Gastrocnemius medialis (tissue), 4 donors: ENCODE measurements at regions of chr9 and their contacts with region 1.

Region 1: DNA sequence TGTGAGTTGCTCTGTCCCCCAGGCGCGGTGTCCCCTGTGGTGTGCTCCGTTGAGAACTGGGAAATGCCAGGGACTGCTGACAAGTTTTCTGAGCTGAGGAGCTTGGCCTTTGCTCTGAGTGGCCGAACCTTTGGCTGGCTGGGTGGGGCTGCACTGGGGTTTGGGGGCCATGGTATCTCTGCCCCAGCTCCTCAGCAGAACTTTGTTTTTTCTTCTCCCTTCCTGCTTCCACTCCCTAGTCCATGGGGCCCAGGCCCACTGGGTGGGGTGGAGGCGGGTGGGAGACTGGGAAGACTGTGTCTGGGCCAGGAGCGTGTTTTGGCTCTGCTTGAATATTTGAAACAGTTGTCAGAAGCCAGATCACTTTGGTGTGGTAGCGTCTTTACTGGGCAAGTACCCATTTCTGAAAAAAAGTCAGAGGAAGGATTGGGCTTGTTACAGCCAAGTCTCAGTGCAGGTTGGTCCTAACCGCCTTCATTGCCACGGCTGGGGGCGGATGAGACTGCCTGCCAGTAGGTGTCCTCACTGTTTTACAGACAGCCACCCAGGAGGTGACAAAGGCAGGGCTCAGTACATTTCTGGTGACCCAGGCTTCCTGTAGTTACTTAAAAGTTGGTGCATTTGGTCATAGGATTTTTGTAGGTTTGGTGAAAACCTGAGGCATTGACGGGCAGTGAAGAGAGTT is 92.7 kb downstream of the DAB2IP start:
- DNase-seq: peak; percentile 70 to 79
- ATAC-seq: peak; percentile 64 to 65
- H3K4me3 ChIP-seq: peak overlapping the region; percentile 54 to 61 (median 56)
- H3K27ac ChIP-seq: peak overlapping the region; percentile 91 to 98 (median 94)
- H3K4me1 ChIP-seq: peaks cover 81 to 84% of the 10 kb centered on the region in 2 donors
- H3K27me3 ChIP-seq: no peaks in the 10 kb centered on the region
- CTCF ChIP-seq: peak; percentile 34 to 73 (median 58)
- POLR2A ChIP-seq: no peak

Region 2: GRCh38 chr9:121362813-121363621 is 381.1 kb before region 1 on chr9:
- in situ Hi-C with region 1: no loop called
- intact Hi-C with region 1: loop called (anchors 5 kb)
- DNase-seq: no peak
- ATAC-seq: peak; percentile 45 to 62
- H3K4me3 ChIP-seq: peak overlapping the region in 3 of 4 donors; percentile 10 to 34 (median 13)
- H3K27ac ChIP-seq: peak overlapping the region; percentile 94 to 99 (median 96)
- H3K4me1 ChIP-seq: peaks cover 96 to 97% of the 10 kb centered on the region in 2 donors
- H3K27me3 ChIP-seq: no peaks in the 10 kb centered on the region
- CTCF ChIP-seq: no peak
- POLR2A ChIP-seq: no peak

Region 3: GRCh38 chr9:121598965-121599871 is 144.9 kb before region 1 on chr9:
- in situ Hi-C with region 1: no loop called
- intact Hi-C with region 1: no loop called
- DNase-seq: peak; percentile 83 to 90
- ATAC-seq: peak; percentile 55 to 68
- H3K4me3 ChIP-seq: peak overlapping the region; percentile 70 to 98 (median 76)
- H3K27ac ChIP-seq: peak overlapping the region; percentile 94 to 98 (median 96)
- H3K4me1 ChIP-seq: peaks cover 40 to 41% of the 10 kb centered on the region in 2 donors
- H3K27me3 ChIP-seq: no peaks in the 10 kb centered on the region
- CTCF ChIP-seq: peak in 1 of 5 experiments; percentile 8
- POLR2A ChIP-seq: peak; percentile 89 to 92

Region 4: GRCh38 chr9:121686930-121687541 is 57.1 kb before region 1 on chr9:
- in situ Hi-C with region 1: no loop called
- intact Hi-C with region 1: loop called (anchors 5 kb)
- DNase-seq: peak; percentile 57 to 80
- ATAC-seq: peak; percentile 77 to 86
- H3K4me3 ChIP-seq: no peak overlapping the region
- H3K27ac ChIP-seq: peak overlapping the region; percentile 65 to 69 (median 67)
- H3K4me1 ChIP-seq: peaks cover 20 to 23% of the 10 kb centered on the region in 2 donors
- H3K27me3 ChIP-seq: no peaks in the 10 kb centered on the region
- CTCF ChIP-seq: peak; percentile 80 to 90 (median 87)
- POLR2A ChIP-seq: no peak

Region 5: GRCh38 chr9:121770415-121771273 is 26.5 kb after region 1 on chr9:
- in situ Hi-C with region 1: no loop called
- intact Hi-C with region 1: loop called (anchors 1 kb)
- DNase-seq: no peak
- ATAC-seq: no peak
- H3K4me3 ChIP-seq: no peak overlapping the region
- H3K27ac ChIP-seq: peak overlapping the region; percentile 80 to 88 (median 85)
- H3K4me1 ChIP-seq: peaks cover 31 to 34% of the 10 kb centered on the region in 2 donors
- H3K27me3 ChIP-seq: no peaks in the 10 kb centered on the region
- CTCF ChIP-seq: no peak
- POLR2A ChIP-seq: no peak

Region 6: GRCh38 chr9:121861501-121862180 is 117.5 kb after region 1 on chr9:
- in situ Hi-C with region 1: no loop called
- intact Hi-C with region 1: loop called (anchors 1 kb)
- DNase-seq: peak; percentile 40 to 70
- ATAC-seq: peak; percentile 73 to 91
- H3K4me3 ChIP-seq: no peak overlapping the region
- H3K27ac ChIP-seq: peak overlapping the region in 2 of 4 donors; percentile 2 to 39
- H3K4me1 ChIP-seq: peaks cover 3 to 6% of the 10 kb centered on the region in 2 donors
- H3K27me3 ChIP-seq: no peaks in the 10 kb centered on the region
- CTCF ChIP-seq: peak; percentile 29 to 66 (median 55)
- POLR2A ChIP-seq: no peak

Region 7: GRCh38 chr9:122016744-122017143 is 272.6 kb after region 1 on chr9:
- in situ Hi-C with region 1: no loop called
- intact Hi-C with region 1: no loop called
- DNase-seq: no peak
- ATAC-seq: no peak
- H3K4me3 ChIP-seq: no peak overlapping the region
- H3K27ac ChIP-seq: no peak overlapping the region
- H3K4me1 ChIP-seq: peaks cover 30 to 35% of the 10 kb centered on the region in 2 donors
- H3K27me3 ChIP-seq: no peaks in the 10 kb centered on the region
- CTCF ChIP-seq: peak in 2 of 5 experiments; percentile 12 to 48
- POLR2A ChIP-seq: no peak

Region 8: GRCh38 chr9:122180651-122181050 is 436.5 kb after region 1 on chr9:
- in situ Hi-C with region 1: no loop called
- intact Hi-C with region 1: no loop called
- DNase-seq: no peak
- ATAC-seq: no peak
- H3K4me3 ChIP-seq: no peak overlapping the region
- H3K27ac ChIP-seq: no peak overlapping the region
- H3K4me1 ChIP-seq: no peaks in the 10 kb centered on the region
- H3K27me3 ChIP-seq: peaks cover 0 to 18% (median 15%) of the 10 kb centered on the region in 3 donors
- CTCF ChIP-seq: no peak
- POLR2A ChIP-seq: no peak

Region 9: DNA sequence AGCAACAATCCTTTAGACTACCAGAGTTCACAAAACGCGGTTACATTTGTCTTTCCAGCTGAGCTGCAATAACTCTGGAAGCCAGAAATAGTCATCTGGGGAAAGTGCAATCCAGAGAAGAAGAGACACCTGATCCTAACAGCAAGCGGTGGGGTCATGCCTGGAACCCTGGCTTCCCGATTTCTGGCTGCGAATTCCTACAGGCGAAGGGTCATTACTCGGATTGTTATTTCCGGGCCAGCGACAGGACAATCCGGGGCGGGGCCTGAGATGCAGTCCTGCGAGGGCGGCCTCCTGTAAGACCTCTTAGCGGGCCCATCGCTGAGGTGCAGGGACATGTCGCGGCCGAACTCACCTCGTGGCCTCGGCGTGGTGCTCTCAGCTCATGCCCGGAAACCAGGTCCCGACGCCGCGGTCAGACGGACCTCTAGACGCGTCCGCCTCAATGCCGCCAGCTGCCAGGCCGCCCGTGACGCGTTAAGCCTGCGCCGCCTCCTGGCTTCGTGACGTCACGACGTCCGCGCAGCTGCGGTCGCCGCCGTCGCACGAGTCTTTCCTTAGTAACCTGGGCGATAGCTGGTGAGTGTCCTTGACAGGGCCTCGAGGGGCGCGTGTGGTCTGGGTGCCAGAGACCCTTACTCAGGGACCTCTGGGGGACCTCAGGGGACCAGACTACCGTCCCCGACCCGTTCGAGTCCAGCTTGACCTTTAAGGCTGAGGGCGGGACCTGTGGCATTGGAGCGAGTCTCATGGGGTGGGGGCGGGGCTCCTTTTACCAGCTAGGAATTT is 520.4 kb after region 1 on chr9 and contains the starts of genes MRRF and RBM18:
- in situ Hi-C with region 1: no loop called
- intact Hi-C with region 1: loop called (anchors 10 kb)
- DNase-seq: peak; percentile 82 to 89
- ATAC-seq: peak; percentile 87 to 94
- H3K4me3 ChIP-seq: peak within 1 kb of the TSS; percentile 66 to 95 (median 86)
- H3K27ac ChIP-seq: peak within 1 kb of the TSS; percentile 92 to 100 (median 98)
- H3K4me1 ChIP-seq: peaks cover 42 to 47% of the 10 kb centered on the region in 2 donors
- H3K27me3 ChIP-seq: no peaks in the 10 kb centered on the region
- CTCF ChIP-seq: peak in 1 of 5 experiments; percentile 39
- POLR2A ChIP-seq: peak; percentile 73 to 77
- total RNA-seq, gene MRRF: 33.2 to 55.7 (median 47.2) TPM
- total RNA-seq, gene RBM18: 10.6 to 26.6 (median 21.8) TPM